ENCODE measurements at regions of chr15 and their contacts with region 1.

Region 1: GRCh38 chr15:91694831-91695210 is 158.7 kb upstream of the SLCO3A1 start:
- DNase-seq: peak; percentile 61
- H3K4me3 ChIP-seq: peak overlapping the region; percentile 9 to 30 (median 25)
- H3K27ac ChIP-seq: peak overlapping the region; percentile 36
- H3K4me1 ChIP-seq: peaks cover 9% of the 10 kb centered on the region
- H3K27me3 ChIP-seq: no peaks in the 10 kb centered on the region
- CTCF ChIP-seq: no peak

Region 2: DNA sequence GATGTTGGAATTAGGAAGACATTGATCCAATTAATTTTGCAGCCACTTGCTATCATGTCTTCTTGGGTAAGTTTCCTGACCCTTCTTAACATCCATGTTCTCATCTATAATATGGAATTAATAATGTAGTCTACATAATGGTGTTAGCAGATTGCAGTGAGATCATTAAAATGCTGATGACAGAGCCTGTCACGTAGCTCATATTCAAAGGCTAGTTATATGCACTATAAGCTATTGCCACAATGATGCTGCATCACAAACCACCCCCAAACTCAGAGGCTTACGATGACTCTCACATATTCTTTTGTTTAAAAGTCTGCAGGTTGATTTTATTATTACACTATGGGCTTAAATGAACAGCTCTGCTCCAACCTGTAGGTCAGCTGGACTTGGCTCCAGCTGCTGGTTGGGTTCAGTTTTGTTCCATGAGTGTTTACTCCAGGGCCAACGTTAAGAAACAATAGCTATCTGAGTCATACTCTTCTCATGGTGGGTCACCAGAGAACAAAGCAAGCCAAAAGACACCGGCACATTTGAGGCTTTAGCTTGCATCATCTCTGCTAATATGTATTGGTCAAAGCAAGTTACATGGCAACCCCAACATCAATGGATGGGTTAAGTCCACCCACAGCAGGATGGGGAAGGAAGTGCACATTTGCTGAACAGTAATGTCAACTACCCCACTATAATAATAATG is 91.3 kb before region 1 on chr15:
- CTCF ChIA-PET with region 1: no interaction called
- dilution Hi-C with region 1: no loop called
- in situ Hi-C with region 1: no loop called
- intact Hi-C with region 1: no loop called
- DNase-seq: peak; percentile 2
- H3K4me3 ChIP-seq: no peak overlapping the region
- H3K27ac ChIP-seq: no peak overlapping the region
- H3K4me1 ChIP-seq: no peaks in the 10 kb centered on the region
- H3K27me3 ChIP-seq: peaks cover 3% of the 10 kb centered on the region
- CTCF ChIP-seq: no peak

Region 3: DNA sequence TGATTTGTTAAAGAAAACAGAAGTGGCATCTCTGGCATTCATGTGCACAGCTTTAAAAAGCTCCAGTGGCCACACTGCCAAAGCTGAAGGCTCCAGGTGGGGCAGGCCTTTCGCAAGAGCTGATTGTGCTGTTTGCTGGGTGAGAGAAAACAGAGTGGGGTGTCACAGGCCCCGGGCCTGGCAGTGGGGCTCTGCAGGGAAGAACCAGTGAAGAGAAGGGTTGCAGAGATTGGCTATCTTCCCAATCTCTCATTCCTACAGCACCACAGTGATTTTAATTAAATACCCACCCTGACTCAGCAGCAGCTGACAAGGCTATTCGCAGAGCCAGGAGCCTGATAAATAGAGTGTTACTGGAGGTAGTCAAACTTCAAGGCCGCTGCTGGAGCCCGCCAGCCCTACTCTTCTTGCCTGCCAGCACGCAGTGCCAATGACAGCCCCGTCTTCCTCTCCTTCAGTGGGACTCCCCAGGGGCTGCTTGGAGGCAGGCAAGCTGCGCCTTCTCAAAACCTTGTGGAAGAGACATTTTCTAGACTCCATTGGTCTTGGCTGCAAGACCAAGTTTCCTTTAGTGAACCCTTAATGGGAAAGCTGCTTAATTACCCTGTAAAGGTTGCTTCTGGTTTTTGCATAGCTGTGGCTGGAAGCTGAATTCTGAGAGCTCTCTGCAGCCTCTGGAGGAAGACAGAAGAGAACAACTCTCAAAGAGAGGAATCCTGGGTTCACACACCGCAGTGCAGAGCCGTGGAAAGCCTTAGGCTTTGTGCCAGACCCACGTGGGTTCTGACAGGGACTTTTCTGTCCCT is 67.1 kb before region 1 on chr15:
- CTCF ChIA-PET with region 1: no interaction called
- dilution Hi-C with region 1: no loop called
- in situ Hi-C with region 1: no loop called
- intact Hi-C with region 1: no loop called
- DNase-seq: peak; percentile 19
- H3K4me3 ChIP-seq: no peak overlapping the region
- H3K27ac ChIP-seq: no peak overlapping the region
- H3K4me1 ChIP-seq: peaks cover 3% of the 10 kb centered on the region
- H3K27me3 ChIP-seq: no peaks in the 10 kb centered on the region
- CTCF ChIP-seq: no peak

Region 4: GRCh38 chr15:91649831-91650321 is 44.9 kb before region 1 on chr15:
- CTCF ChIA-PET with region 1: interaction called, 24 read pairs
- dilution Hi-C with region 1: no loop called
- in situ Hi-C with region 1: no loop called
- intact Hi-C with region 1: no loop called
- DNase-seq: no peak
- H3K4me3 ChIP-seq: no peak overlapping the region
- H3K27ac ChIP-seq: no peak overlapping the region
- H3K4me1 ChIP-seq: no peaks in the 10 kb centered on the region
- H3K27me3 ChIP-seq: no peaks in the 10 kb centered on the region
- CTCF ChIP-seq: no peak

Region 5: GRCh38 chr15:91833056-91833455 is 138.2 kb after region 1 on chr15:
- CTCF ChIA-PET with region 1: no interaction called
- dilution Hi-C with region 1: no loop called
- in situ Hi-C with region 1: no loop called
- intact Hi-C with region 1: no loop called
- DNase-seq: no peak
- H3K4me3 ChIP-seq: no peak overlapping the region
- H3K27ac ChIP-seq: no peak overlapping the region
- H3K4me1 ChIP-seq: no peaks in the 10 kb centered on the region
- H3K27me3 ChIP-seq: no peaks in the 10 kb centered on the region
- CTCF ChIP-seq: no peak

Region 6: GRCh38 chr15:91867581-91868026 is 172.8 kb after region 1 on chr15:
- CTCF ChIA-PET with region 1: no interaction called
- dilution Hi-C with region 1: no loop called
- in situ Hi-C with region 1: no loop called
- intact Hi-C with region 1: no loop called
- DNase-seq: peak; percentile 99
- H3K4me3 ChIP-seq: peak overlapping the region; percentile 10 to 52 (median 32)
- H3K27ac ChIP-seq: peak overlapping the region; percentile 99
- H3K4me1 ChIP-seq: peaks cover 49% of the 10 kb centered on the region
- H3K27me3 ChIP-seq: no peaks in the 10 kb centered on the region
- CTCF ChIP-seq: no peak